ENCODE measurements at regions of chr5 and their contacts with region 1.

Region 1: DNA sequence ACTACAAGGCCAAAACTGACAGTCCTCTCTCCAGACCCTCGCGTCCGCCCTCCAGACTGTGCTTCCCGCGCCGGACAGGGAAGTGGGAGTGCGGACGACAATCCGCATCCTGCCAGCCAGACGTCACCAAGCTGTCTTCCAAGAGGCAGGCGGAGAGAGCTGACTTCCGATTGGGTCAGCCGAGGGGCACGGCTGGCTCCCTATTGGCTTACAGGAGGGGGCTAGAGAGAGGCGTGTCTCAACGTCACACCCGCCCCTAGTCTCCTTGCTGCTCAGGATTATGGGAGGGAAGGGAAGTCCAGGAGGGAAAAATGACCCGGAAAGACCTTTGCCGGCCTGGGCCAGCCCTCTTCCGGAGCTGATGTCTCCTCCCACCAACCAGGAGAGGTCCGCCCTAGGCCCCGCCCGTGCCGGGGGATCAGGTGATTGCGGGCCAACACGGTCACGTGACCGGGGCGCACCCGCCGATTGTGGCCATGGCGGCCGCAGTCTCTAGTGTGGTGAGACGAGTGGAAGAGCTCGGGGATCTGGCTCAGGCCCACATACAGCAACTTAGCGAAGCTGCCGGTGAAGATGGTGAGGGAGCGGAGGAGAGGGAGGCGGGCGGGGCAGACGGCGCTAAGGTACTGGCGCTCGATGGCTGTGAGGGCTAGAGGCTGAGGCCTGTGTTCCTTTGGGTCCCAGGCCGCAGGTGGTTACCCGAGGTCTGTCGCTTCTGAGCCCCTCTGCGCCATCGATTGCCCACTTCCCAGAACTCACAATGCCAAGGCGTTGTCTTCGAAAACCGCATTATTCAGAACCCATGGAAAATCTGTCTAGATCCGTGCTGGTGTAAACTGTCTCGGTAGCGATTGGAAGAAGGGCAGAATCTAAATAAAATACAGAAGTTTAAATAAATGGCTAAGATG is at the start of gene RIMOC1:
- DNase-seq: peak; percentile 94 to 99 (median 97)
- ATAC-seq: peak; percentile 89
- H3K4me3 ChIP-seq: peak within 1 kb of the TSS; percentile 73 to 83
- H3K4me3 Mint-ChIP-seq: peak within 1 kb of the TSS; percentile 99
- H3K27ac ChIP-seq: peak within 1 kb of the TSS; percentile 84 to 91
- H3K27ac Mint-ChIP-seq: peak within 1 kb of the TSS; percentile 100
- H3K4me1 ChIP-seq: peaks cover 17% of the 10 kb centered on the region
- H3K4me1 Mint-ChIP-seq: peaks cover 44% of the 10 kb centered on the region
- H3K27me3 ChIP-seq: no peaks in the 10 kb centered on the region
- H3K27me3 Mint-ChIP-seq: no peaks in the 10 kb centered on the region
- CTCF ChIP-seq: no peak
- total RNA-seq, gene RIMOC1: 9.0 to 9.2 TPM

Region 2: DNA sequence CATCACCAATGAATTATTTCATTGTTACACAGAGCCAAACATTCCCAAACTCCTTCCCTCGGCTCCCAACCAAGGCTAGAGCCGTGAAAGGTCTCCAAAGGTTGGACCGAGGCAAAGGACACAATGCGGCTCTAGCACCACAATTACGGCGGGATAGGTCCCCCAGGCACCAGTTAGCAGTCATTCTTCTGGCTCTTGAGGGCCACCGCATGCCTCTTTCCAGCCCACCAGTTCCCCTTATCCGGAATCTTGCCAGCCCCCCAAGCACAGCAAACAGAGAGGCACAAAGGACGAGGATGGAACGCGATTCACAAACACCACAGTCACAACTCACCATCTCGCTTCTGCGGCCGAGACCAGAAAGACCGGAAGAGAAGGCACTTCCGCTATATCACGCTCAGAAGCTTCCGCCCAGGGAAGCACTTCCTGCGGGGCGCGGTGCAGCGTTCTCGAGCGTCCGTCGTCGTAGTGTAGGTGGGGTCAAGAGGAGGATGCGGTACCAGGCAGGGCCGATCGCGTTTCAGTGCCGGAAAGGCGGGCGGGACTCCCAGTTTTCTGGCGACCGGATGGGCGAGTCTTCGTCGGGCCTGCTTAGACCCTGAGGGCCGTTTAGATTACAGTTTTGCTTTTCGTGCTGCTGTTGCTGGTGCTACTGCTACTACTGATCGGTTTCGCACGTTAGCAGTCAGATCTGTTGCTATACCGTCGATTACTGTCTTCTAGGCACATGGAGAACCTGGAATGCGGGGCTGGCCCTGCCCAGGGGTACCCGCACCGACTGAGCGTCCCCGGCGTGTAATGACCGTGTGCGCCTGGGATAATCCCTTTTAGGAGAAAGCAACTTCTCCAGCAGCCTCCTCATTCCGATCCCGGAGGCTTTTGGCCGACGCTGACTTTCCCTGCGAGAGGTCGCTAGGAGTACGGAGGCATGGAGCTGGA is 1069.0 kb before region 1 on chr5 and contains the start of gene RPL37:
- CTCF ChIA-PET with region 1: no interaction called
- POLR2A ChIA-PET with region 1: interaction called, 4 read pairs
- intact Hi-C with region 1: loop called (anchors 1 to 10 kb)
- DNase-seq: peak; percentile 81 to 96 (median 90)
- ATAC-seq: peak; percentile 84
- H3K4me3 ChIP-seq: peak within 1 kb of the TSS; percentile 87 to 94
- H3K4me3 Mint-ChIP-seq: peak within 1 kb of the TSS; percentile 97
- H3K27ac ChIP-seq: peak within 1 kb of the TSS; percentile 89 to 99
- H3K27ac Mint-ChIP-seq: peak within 1 kb of the TSS; percentile 98
- H3K4me1 ChIP-seq: peaks cover 20% of the 10 kb centered on the region
- H3K4me1 Mint-ChIP-seq: peaks cover 45% of the 10 kb centered on the region
- H3K27me3 ChIP-seq: peaks cover 0 to 3% of the 10 kb centered on the region in 2 experiments
- H3K27me3 Mint-ChIP-seq: no peaks in the 10 kb centered on the region
- CTCF ChIP-seq: no peak
- total RNA-seq, gene RPL37: 2,804 to 2,873 TPM

Region 3: GRCh38 chr5:41869739-41870626 is 34.2 kb before region 1 on chr5 and contains the start of gene OXCT1:
- CTCF ChIA-PET with region 1: no interaction called
- POLR2A ChIA-PET with region 1: interaction called, 26 read pairs
- intact Hi-C with region 1: loop called (anchors 1 kb)
- DNase-seq: peak; percentile 87 to 97 (median 93)
- ATAC-seq: peak; percentile 94
- H3K4me3 ChIP-seq: peak within 1 kb of the TSS; percentile 90 to 98
- H3K4me3 Mint-ChIP-seq: peak within 1 kb of the TSS; percentile 92
- H3K27ac ChIP-seq: peak within 1 kb of the TSS; percentile 87 to 90
- H3K27ac Mint-ChIP-seq: peak within 1 kb of the TSS; percentile 98
- H3K4me1 ChIP-seq: peaks cover 24% of the 10 kb centered on the region
- H3K4me1 Mint-ChIP-seq: peaks cover 48% of the 10 kb centered on the region
- H3K27me3 ChIP-seq: no peaks in the 10 kb centered on the region
- H3K27me3 Mint-ChIP-seq: no peaks in the 10 kb centered on the region
- CTCF ChIP-seq: no peak
- total RNA-seq, gene OXCT1: 16.1 to 19.8 TPM

Region 4: GRCh38 chr5:42908509-42909488 is 1004.7 kb after region 1 on chr5:
- CTCF ChIA-PET with region 1: no interaction called
- POLR2A ChIA-PET with region 1: no interaction called
- intact Hi-C with region 1: loop called in 1 of 2 experiments (anchors 10 kb)
- DNase-seq: peak; percentile 78 to 96 (median 90)
- ATAC-seq: peak; percentile 91
- H3K4me3 ChIP-seq: peak overlapping the region; percentile 65 to 71
- H3K4me3 Mint-ChIP-seq: peak overlapping the region; percentile 93
- H3K27ac ChIP-seq: peak overlapping the region; percentile 57 to 60
- H3K27ac Mint-ChIP-seq: peak overlapping the region; percentile 95
- H3K4me1 ChIP-seq: peaks cover 9% of the 10 kb centered on the region
- H3K4me1 Mint-ChIP-seq: peaks cover 14% of the 10 kb centered on the region
- H3K27me3 ChIP-seq: no peaks in the 10 kb centered on the region
- H3K27me3 Mint-ChIP-seq: peaks cover 2% of the 10 kb centered on the region
- CTCF ChIP-seq: peak; percentile 86

Region 5: DNA sequence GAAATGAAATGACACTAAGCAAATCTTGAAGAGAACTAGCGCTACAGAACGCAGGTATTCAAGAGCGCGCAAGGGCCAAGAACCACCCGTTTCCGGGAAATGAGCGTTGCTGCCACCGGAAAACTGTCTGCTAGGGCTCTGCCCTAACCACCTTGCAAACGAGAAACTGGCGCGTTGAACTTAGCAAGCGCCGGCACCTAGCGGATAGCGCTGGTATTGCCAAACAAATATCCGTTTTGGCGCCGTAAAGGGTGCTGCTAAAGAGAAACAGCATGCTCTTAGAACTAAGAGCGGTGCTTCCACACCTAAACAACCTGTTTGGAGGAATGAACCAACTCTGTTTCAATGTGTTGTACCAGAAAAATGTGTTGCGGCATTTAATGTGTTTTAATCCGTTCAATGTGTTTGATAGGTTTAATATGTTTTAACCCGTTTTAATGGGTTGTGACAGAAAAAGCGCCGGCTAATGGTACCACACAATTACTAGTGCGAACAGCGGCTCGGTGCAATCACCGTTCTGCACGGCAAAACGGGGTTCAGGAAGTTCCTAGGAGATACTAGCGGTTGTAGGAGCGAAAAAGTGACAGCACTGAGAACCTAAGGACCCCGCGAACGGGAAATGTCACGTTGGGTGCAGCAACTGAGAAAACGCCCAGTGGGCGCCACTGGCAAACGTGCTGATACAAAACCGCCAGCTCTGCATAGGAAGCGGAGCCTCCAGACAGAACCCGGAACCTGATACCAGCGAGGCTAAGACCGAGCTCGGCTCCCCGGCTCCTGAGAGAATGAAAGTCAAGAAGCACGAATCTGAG is 1136.3 kb after region 1 on chr5 and contains the start of gene ANXA2R:
- CTCF ChIA-PET with region 1: no interaction called
- POLR2A ChIA-PET with region 1: interaction called, 6 read pairs
- intact Hi-C with region 1: loop called in 1 of 2 experiments (anchors 10 kb)
- DNase-seq: peak; percentile 88 to 98 (median 93)
- ATAC-seq: peak; percentile 58
- H3K4me3 ChIP-seq: peak within 1 kb of the TSS; percentile 86 to 87
- H3K4me3 Mint-ChIP-seq: peak within 1 kb of the TSS; percentile 93
- H3K27ac ChIP-seq: peak within 1 kb of the TSS; percentile 93 to 94
- H3K27ac Mint-ChIP-seq: peak within 1 kb of the TSS; percentile 98
- H3K4me1 ChIP-seq: peaks cover 27% of the 10 kb centered on the region
- H3K4me1 Mint-ChIP-seq: peaks cover 56% of the 10 kb centered on the region
- H3K27me3 ChIP-seq: no peaks in the 10 kb centered on the region
- H3K27me3 Mint-ChIP-seq: no peaks in the 10 kb centered on the region
- CTCF ChIP-seq: peak; percentile 79
- total RNA-seq, gene ANXA2R: 38.2 to 39.5 TPM

Region 6: GRCh38 chr5:43556857-43557542 is 1652.9 kb after region 1 on chr5 and contains the start of gene PAIP1:
- CTCF ChIA-PET with region 1: no interaction called
- POLR2A ChIA-PET with region 1: no interaction called
- intact Hi-C with region 1: loop called (anchors 10 kb)
- DNase-seq: peak; percentile 67 to 92 (median 83)
- ATAC-seq: peak; percentile 81
- H3K4me3 ChIP-seq: peak within 1 kb of the TSS; percentile 73 to 88
- H3K4me3 Mint-ChIP-seq: peak within 1 kb of the TSS; percentile 90
- H3K27ac ChIP-seq: peak within 1 kb of the TSS; percentile 82 to 93
- H3K27ac Mint-ChIP-seq: peak within 1 kb of the TSS; percentile 97
- H3K4me1 ChIP-seq: peaks cover 45% of the 10 kb centered on the region
- H3K4me1 Mint-ChIP-seq: peaks cover 13% of the 10 kb centered on the region
- H3K27me3 ChIP-seq: no peaks in the 10 kb centered on the region
- H3K27me3 Mint-ChIP-seq: peaks cover 2% of the 10 kb centered on the region
- CTCF ChIP-seq: peak; percentile 77
- total RNA-seq, gene PAIP1: 40.3 to 45.7 TPM